Mammary epithelial cell (primary cell): ENCODE measurements at regions of chr3 and their contacts with region 1.

Region 1: DNA sequence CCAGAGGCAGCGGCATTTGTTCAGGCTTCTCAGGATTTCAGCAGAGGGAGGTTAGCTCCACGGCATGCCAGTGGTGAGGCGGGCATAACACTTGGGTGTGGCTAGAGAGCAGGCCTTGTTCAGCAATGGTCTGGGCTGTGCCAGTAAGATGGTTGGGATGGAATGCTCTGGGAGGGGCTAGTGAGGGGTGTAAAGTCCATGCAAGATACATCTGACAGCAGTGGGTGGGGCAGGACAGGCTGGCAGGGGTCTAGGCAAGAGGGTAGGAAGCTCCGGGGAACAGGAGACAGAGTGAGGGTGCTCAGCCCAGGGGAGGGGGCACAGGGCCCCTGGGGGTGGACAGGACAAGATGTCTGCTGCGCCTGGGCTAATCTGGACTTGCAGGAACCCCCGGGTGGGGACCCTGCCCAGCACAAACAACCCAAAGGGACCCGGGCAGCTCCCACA is 8.4 kb downstream of the TMEM43 start:
- DNase-seq: no peak
- H3K4me3 ChIP-seq: no peak overlapping the region
- H3K27ac ChIP-seq: no peak overlapping the region
- H3K4me1 ChIP-seq: peaks cover 16% of the 10 kb centered on the region
- H3K27me3 ChIP-seq: no peaks in the 10 kb centered on the region
- CTCF ChIP-seq: no peak

Region 2: GRCh38 chr3:13452490-13453335 is 680.6 kb before region 1 on chr3:
- CTCF ChIA-PET with region 1: no interaction called
- dilution Hi-C with region 1: no loop called
- in situ Hi-C with region 1: no loop called
- intact Hi-C with region 1: no loop called
- DNase-seq: peak; percentile 38
- H3K4me3 ChIP-seq: no peak overlapping the region
- H3K27ac ChIP-seq: peak overlapping the region; percentile 72
- H3K4me1 ChIP-seq: peaks cover 10% of the 10 kb centered on the region
- H3K27me3 ChIP-seq: no peaks in the 10 kb centered on the region
- CTCF ChIP-seq: peak; percentile 63 to 70

Region 3: GRCh38 chr3:14225421-14225820 is 92.1 kb after region 1 on chr3:
- CTCF ChIA-PET with region 1: no interaction called
- dilution Hi-C with region 1: loop called (anchors 5 kb)
- in situ Hi-C with region 1: no loop called
- intact Hi-C with region 1: no loop called
- DNase-seq: no peak
- H3K4me3 ChIP-seq: no peak overlapping the region
- H3K27ac ChIP-seq: no peak overlapping the region
- H3K4me1 ChIP-seq: peaks cover 21% of the 10 kb centered on the region
- H3K27me3 ChIP-seq: no peaks in the 10 kb centered on the region
- CTCF ChIP-seq: no peak

Region 4: DNA sequence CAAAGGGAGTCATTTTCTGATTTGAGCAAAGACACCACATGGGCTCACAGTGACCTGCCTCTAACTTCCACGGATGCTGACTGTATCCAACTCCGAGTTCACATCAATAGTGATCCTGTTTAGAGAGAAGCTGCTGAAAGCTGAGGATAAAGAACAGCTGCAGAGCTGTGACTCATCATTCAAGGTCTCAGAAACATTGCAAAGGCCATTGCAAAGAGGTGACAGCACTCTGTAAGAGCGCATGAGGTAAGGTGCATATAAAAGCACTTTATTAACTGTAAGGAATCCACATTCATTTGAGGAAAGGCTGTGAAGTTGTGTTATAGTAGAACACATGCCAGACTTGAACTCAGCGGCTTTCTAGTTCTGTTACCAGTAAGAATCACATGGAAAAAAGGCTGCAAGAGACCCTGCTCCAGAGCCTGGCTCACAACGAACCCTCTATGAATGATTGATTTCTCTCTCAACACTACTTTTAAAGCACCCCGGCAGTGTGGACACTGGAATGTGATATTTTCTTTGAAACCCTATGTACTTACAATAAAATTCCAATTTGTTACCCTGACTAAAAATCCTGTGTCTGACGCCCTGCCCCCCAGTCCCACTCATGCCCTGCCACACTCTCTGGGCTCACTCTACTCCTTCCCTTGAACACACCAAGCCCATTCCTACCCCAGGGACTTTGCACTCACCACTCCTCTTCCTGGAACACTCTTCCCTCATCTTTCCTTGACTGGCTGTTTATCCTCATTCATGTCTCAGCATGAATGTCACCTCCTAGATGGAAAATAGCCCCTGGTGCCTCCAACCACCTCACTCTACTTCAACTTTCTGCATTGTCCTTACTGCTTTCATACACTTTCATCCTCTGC is 156.5 kb after region 1 on chr3:
- CTCF ChIA-PET with region 1: no interaction called
- dilution Hi-C with region 1: no loop called
- in situ Hi-C with region 1: no loop called
- intact Hi-C with region 1: no loop called
- DNase-seq: peak; percentile 38
- H3K4me3 ChIP-seq: no peak overlapping the region
- H3K27ac ChIP-seq: no peak overlapping the region
- H3K4me1 ChIP-seq: no peaks in the 10 kb centered on the region
- H3K27me3 ChIP-seq: no peaks in the 10 kb centered on the region
- CTCF ChIP-seq: no peak